Natural killer cell (primary cell): ENCODE measurements at regions of chr17 and their contacts with region 1.

Region 1: DNA sequence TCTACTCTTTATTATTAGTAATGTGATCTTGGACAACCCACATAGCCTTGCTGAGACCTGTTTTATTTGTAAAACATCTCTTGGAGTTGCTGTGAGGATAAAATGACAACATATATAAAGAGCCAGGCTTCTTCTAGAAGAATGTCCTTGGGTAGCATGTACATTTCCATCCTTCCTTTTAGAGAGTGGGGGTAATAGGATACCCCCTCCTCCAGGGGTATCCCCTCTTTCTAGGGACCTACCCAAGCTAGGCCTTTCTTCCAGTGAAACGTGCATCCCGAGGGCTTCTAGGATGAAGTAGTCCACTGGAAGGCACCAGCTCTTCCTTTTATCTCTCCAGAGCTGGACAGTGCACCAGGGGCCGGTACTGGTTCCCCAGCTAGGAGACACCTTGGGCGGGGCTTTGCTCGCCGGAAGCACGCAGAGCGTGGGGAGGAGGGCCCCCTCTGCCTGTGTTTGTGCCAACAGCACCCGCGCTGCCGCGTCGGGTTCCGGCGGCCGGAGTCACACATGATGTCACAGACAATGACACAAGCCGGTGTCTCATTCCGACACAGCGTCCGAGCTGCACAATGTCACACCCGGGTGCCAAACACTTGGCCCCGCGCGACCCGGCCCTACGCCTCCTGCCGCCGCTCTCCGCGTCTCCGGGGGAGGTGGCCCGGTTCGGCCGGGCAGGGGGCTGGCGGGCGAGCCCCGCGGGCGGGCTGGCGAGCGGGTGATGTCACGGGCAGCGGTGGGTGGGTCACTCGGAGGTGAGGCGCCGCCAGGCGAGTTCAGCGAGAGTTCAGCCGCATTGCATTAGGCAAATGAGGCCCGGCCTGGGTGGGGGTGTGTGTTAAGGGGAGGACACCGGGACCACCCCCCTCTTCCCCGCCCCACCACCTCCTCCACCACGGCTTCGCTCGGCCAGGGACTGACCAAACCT is 23.4 kb downstream of the GJD3 start:
- DNase-seq: peak; percentile 91 to 94
- ATAC-seq: peak; percentile 74 to 92 (median 79)
- H3K4me3 ChIP-seq: peak overlapping the region; percentile 60
- H3K4me3 Mint-ChIP-seq: peak overlapping the region; percentile 82
- H3K27ac ChIP-seq: peak overlapping the region; percentile 91
- H3K27ac Mint-ChIP-seq: peak overlapping the region; percentile 89 to 97
- H3K4me1 ChIP-seq: peaks cover 83% of the 10 kb centered on the region
- H3K4me1 Mint-ChIP-seq: peaks cover 62 to 82% of the 10 kb centered on the region in 2 donors
- H3K27me3 ChIP-seq: no peaks in the 10 kb centered on the region
- H3K27me3 Mint-ChIP-seq: no peaks in the 10 kb centered on the region
- CTCF ChIP-seq: peak; percentile 30

Region 2: DNA sequence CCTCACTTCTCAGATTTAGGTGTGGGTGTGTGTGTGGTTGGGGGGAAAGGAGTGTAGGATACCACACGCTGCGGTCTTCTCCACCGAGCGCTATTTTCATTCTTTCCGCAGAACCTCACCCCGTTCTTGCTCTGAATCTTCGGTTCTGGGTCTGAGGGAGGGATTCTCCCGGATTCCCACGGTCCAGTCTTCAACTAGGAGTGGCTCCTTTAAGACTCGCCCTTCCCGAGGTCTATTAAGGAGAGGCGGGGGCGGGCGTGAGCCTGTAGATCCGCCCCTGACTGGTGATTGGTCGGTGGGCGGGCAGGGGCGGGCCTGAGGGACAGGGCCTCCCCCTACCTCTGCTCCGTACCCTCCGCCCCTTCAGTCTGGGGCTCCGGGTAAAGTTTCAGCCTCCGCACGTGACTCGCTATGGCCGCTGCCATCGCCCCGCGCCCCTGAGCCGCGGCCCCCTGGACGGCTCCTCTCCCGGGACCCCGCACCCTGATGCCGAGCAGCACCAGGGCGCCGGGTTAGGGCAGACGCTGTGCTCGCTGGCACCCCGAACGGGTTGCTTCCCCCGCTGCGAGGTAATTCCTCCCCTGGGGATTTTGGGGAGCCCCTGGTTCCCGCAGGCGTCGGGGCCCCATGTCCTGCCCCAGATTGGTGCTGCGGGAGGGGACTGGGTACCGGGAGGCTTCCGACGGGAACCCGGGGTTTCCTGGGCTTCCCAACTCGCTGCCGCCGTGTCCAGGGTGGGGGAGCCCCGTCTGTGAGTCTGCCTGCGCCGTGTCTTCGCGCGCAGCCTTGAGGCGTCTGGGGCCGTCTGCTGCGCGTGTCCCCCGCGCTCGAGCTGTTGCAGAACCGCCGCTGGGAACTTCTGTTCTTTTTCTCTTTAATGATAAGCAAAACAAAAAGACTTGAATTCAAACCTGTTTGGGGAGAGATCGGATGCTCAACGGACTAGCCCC is 23.0 kb before region 1 on chr17:
- intact Hi-C with region 1: loop called (anchors 1 kb)
- DNase-seq: peak; percentile 89 to 95
- ATAC-seq: peak; percentile 61 to 86 (median 71)
- H3K4me3 ChIP-seq: peak overlapping the region; percentile 79
- H3K4me3 Mint-ChIP-seq: peak overlapping the region; percentile 94
- H3K27ac ChIP-seq: peak overlapping the region; percentile 98
- H3K27ac Mint-ChIP-seq: peak overlapping the region; percentile 99
- H3K4me1 ChIP-seq: peaks cover 94% of the 10 kb centered on the region
- H3K4me1 Mint-ChIP-seq: peaks cover 78 to 95% of the 10 kb centered on the region in 2 donors
- H3K27me3 ChIP-seq: no peaks in the 10 kb centered on the region
- H3K27me3 Mint-ChIP-seq: no peaks in the 10 kb centered on the region
- CTCF ChIP-seq: no peak